GM12878 (cell line): ENCODE measurements at regions of chr11 and their contacts with region 1.

Region 1: GRCh38 chr11:4072668-4073285 is 21.8 kb upstream of the RRM1 start:
- DNase-seq: peak; percentile 51
- ATAC-seq: peak; percentile 95
- H3K4me3 ChIP-seq: no peak overlapping the region
- H3K27ac ChIP-seq: no peak overlapping the region
- H3K4me1 ChIP-seq: no peaks in the 10 kb centered on the region
- H3K27me3 ChIP-seq: no peaks in the 10 kb centered on the region
- CTCF ChIP-seq: peak; percentile 75 to 95 (median 83)
- EP300 ChIP-seq: no peak
- POLR2A ChIP-seq: no peak
- RAD21 ChIP-seq: peak; percentile 98

Region 2: DNA sequence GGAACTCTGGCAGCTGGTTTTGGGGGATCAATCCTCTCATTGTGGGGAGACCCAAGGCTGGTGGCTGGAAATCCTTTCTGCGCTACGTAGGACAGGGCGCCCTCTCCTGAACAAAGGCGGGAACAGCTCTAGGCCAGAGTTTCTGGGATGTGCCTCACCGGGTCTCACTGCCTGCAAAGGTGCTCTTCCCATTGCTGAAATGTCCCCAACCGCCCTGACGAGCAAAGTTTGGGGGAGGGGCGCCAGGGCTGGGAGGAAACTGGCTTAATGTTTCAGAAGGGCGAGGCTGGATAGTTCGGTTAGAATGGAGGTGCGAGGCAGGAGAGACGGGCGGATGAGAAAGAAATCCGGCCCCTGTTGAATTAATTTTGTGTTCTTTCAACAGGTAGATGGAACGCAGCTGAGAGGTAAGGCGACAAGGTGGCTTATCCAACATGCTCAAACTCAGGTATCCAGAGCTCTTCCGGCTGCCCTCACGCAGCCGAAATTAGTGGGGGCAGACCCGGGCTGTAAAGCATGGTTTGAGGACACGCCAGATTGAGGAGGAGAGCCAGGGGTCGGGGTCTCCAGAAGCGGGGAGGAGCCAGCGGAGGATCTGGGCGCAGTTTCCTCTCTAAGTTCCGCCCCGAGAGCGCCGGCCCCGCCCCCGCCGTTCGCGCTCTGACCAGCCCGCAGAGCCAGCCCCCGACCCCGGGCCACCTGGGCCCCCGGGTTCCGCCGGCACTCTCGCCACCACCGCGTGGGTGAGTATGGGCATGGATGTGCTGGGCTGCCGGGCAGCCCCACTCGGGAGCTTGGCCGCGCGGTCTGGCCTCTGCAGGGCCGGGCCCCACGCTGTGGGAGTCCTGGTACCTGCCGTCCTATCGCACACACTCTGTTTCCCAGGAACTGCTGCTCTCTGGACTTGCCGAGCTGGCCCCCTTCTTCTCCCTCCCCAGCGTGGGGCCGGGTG is 264.6 kb before region 1 on chr11 and contains the start of gene PGAP2:
- CTCF ChIA-PET with region 1: interaction called, 43 read pairs
- POLR2A ChIA-PET with region 1: interaction called, 5 read pairs
- RAD21 ChIA-PET with region 1: interaction called, 17 read pairs
- SMC1A ChIA-PET with region 1: interaction called, 26 read pairs
- in situ Hi-C with region 1: no loop called
- intact Hi-C with region 1: no loop called
- DNase-seq: no peak
- ATAC-seq: peak; percentile 89
- H3K4me3 ChIP-seq: peak within 1 kb of the TSS; percentile 92
- H3K27ac ChIP-seq: peak within 1 kb of the TSS; percentile 57
- H3K4me1 ChIP-seq: no peaks in the 10 kb centered on the region
- H3K27me3 ChIP-seq: no peaks in the 10 kb centered on the region
- CTCF ChIP-seq: peak; percentile 71 to 75 (median 73)
- EP300 ChIP-seq: no peak
- POLR2A ChIP-seq: peak; percentile 46; the same call in 1 of the 2 replicates
- RAD21 ChIP-seq: peak; percentile 62
- polyA plus RNA-seq, gene PGAP2: 25.4 to 37.4 TPM

Region 3: DNA sequence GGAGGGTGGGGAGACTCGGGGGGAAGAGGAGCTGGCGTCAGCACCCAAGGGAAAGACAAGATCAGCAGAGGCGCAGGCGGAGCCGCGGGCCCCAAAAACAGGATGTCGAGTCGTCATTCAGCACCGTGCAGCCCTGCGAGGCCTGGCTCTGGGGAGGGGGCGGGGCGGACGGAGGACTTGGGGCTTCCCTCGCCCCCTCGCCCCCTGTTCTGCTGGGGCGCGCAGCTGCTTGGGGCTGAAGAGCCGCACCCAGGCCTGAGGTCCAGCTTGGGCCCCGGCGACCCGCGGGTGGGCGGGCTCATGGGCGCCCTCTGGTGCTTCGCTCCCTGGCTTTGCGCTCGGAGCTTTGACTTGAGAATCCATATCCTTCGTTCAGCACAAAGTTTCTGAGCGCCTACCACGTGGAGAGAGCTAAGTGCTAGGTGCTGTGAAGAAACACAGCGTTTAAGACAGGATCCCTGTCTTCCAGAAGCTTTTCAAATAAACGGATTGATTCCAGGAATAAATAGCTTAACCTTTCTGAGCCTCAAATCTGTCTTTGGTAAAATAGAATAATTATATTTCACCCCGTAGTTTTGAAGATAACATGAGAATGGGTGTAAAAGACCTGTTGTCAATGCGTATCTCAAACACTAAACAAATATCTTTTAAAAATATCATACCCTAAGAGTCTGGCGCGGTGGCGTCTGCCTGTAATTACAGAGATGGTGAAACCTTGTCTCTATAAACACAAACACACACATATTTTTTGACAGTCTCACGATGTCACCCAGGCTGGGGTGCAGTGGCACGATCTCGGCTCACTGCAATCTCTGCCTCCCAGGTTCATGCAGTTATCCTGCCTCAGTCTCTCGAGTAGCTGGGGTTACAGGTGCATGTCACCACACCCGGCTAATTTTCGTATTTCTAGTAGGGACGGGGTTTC is 231.1 kb before region 1 on chr11:
- CTCF ChIA-PET with region 1: interaction called, 979 read pairs
- POLR2A ChIA-PET with region 1: interaction called, 5 read pairs
- RAD21 ChIA-PET with region 1: interaction called, 605 read pairs
- SMC1A ChIA-PET with region 1: interaction called, 805 read pairs
- in situ Hi-C with region 1: loop called (anchors 5 kb)
- intact Hi-C with region 1: no loop called
- DNase-seq: peak; percentile 79
- ATAC-seq: peak; percentile 71
- H3K4me3 ChIP-seq: peak overlapping the region; percentile 98
- H3K27ac ChIP-seq: peak overlapping the region; percentile 82
- H3K4me1 ChIP-seq: peaks cover 15% of the 10 kb centered on the region
- H3K27me3 ChIP-seq: no peaks in the 10 kb centered on the region
- CTCF ChIP-seq: peak; percentile 78 to 88 (median 85)
- EP300 ChIP-seq: no peak
- POLR2A ChIP-seq: peak; percentile 71
- RAD21 ChIP-seq: peak; percentile 54

Region 4: GRCh38 chr11:3880724-3881123 is 192.1 kb before region 1 on chr11:
- CTCF ChIA-PET with region 1: interaction called, 9 read pairs
- POLR2A ChIA-PET with region 1: no interaction called
- RAD21 ChIA-PET with region 1: interaction called, 6 read pairs
- SMC1A ChIA-PET with region 1: interaction called, 10 read pairs
- in situ Hi-C with region 1: no loop called
- intact Hi-C with region 1: no loop called
- DNase-seq: no peak
- ATAC-seq: peak; percentile 70
- H3K4me3 ChIP-seq: peak overlapping the region; percentile 46
- H3K27ac ChIP-seq: peak overlapping the region; percentile 83
- H3K4me1 ChIP-seq: peaks cover 65% of the 10 kb centered on the region
- H3K27me3 ChIP-seq: no peaks in the 10 kb centered on the region
- CTCF ChIP-seq: no peak
- EP300 ChIP-seq: no peak
- POLR2A ChIP-seq: 0 out of 2 replicates have a peak, but pooled peaks have one; percentile 19
- RAD21 ChIP-seq: no peak

Region 5: DNA sequence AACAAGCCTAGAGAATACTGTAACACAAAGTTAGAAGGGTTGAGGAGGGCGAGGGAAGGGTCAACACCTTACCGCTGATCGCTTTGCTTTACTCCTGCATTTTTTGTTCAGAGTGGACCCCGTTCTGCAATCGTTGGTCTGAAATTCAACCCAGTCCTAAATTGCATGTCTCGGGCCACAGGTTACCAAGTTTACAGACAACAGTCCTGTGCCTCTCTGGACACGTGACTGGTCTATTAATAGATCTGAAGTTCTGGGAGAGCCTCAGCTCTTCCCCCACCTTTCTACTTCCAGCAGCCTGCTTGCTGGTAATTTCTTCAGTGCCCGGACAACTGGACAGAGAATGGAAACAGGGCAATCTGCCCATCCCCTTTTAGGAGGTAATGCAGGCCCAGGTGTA is 143.1 kb before region 1 on chr11:
- CTCF ChIA-PET with region 1: interaction called, 37 read pairs
- POLR2A ChIA-PET with region 1: interaction called, 3 read pairs
- RAD21 ChIA-PET with region 1: interaction called, 9 read pairs
- SMC1A ChIA-PET with region 1: interaction called, 38 read pairs
- in situ Hi-C with region 1: no loop called
- intact Hi-C with region 1: no loop called
- DNase-seq: no peak
- ATAC-seq: no peak
- H3K4me3 ChIP-seq: no peak overlapping the region
- H3K27ac ChIP-seq: no peak overlapping the region
- H3K4me1 ChIP-seq: peaks cover 14% of the 10 kb centered on the region
- H3K27me3 ChIP-seq: no peaks in the 10 kb centered on the region
- CTCF ChIP-seq: no peak
- EP300 ChIP-seq: no peak
- POLR2A ChIP-seq: no peak
- RAD21 ChIP-seq: no peak

Region 6: DNA sequence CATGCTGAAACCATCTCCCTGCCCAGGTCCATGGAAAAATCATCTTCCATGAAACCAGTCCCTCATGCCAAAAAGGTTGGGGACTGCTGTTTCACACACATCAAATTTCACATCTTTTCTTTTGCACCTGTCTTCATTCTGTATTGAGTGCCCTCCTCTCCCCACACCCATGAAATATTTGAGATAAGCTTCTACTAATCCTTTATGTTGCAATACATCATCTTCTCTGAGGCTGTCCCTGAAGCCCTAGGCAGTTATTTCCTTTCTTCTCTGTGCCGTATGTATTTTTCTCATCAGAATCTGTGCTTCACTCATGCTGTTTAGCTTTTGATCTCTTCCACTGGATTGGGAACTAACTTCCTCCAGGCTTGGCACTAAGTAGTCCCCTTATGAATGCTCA is 18.1 kb before region 1 on chr11:
- CTCF ChIA-PET with region 1: interaction called, 45 read pairs
- POLR2A ChIA-PET with region 1: interaction called, 5 read pairs
- RAD21 ChIA-PET with region 1: interaction called, 11 read pairs
- SMC1A ChIA-PET with region 1: interaction called, 14 read pairs
- in situ Hi-C with region 1: no loop called
- intact Hi-C with region 1: no loop called
- DNase-seq: no peak
- ATAC-seq: no peak
- H3K4me3 ChIP-seq: no peak overlapping the region
- H3K27ac ChIP-seq: no peak overlapping the region
- H3K4me1 ChIP-seq: peaks cover 19% of the 10 kb centered on the region
- H3K27me3 ChIP-seq: no peaks in the 10 kb centered on the region
- CTCF ChIP-seq: no peak
- EP300 ChIP-seq: no peak
- POLR2A ChIP-seq: no peak
- RAD21 ChIP-seq: no peak

Region 7: DNA sequence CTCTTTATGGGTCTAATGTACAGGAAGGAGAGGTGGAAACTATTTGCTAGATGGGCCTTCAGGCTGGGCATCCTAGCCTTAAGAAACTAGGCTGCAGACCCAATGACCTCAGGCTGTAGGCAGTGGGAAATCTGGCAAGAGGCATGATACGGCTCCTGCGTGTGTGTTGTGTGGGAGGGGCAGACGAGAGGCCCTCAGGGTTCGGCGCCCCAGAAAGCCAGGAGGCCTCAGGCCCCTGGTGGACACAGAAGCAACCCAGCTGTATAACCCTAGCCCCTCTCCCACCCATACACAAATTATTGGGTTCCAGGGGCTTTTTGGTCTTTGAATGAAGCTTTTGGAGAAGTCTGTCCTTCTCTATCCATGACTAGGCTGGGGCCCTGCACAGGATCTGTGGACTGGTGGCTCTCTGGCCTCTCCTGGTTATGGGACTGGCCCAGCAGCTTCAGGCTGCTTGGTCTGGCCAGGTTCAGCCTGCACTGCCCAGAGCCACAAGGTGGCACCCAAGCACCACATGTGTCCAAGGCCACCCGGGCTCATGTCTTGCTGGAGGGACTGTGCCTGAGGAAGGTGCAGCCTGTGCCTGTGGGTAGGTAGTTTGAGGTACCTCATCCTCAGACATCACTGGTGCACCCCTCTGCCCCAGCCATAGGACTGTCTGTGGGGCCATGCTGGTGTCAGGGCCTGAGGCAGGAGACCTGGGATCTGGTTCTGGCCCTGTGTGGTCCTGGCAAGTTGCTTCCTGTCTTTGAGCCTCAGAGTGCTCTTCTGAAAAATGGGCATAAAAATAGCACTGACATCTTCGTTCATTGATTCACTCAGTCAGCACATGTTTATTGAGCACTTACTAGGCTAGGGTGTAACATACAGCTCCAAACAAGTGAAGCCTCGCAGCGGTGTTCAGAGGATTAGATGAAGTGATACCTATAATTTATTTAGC is 109.3 kb after region 1 on chr11:
- CTCF ChIA-PET with region 1: no interaction called
- POLR2A ChIA-PET with region 1: no interaction called
- RAD21 ChIA-PET with region 1: no interaction called
- SMC1A ChIA-PET with region 1: no interaction called
- in situ Hi-C with region 1: no loop called
- intact Hi-C with region 1: no loop called
- DNase-seq: no peak
- ATAC-seq: peak; percentile 97
- H3K4me3 ChIP-seq: no peak overlapping the region
- H3K27ac ChIP-seq: no peak overlapping the region
- H3K4me1 ChIP-seq: no peaks in the 10 kb centered on the region
- H3K27me3 ChIP-seq: no peaks in the 10 kb centered on the region; a peak in 1 of 4 replicates
- CTCF ChIP-seq: peak; percentile 67 to 90 (median 75)
- EP300 ChIP-seq: no peak
- POLR2A ChIP-seq: no peak
- RAD21 ChIP-seq: peak; percentile 53

Region 8: GRCh38 chr11:4416816-4417215 is 344.0 kb after region 1 on chr11:
- CTCF ChIA-PET with region 1: no interaction called
- POLR2A ChIA-PET with region 1: no interaction called
- RAD21 ChIA-PET with region 1: no interaction called
- SMC1A ChIA-PET with region 1: no interaction called
- in situ Hi-C with region 1: no loop called
- intact Hi-C with region 1: no loop called
- DNase-seq: no peak
- ATAC-seq: no peak
- H3K4me3 ChIP-seq: no peak overlapping the region
- H3K27ac ChIP-seq: no peak overlapping the region
- H3K4me1 ChIP-seq: no peaks in the 10 kb centered on the region
- H3K27me3 ChIP-seq: no peaks in the 10 kb centered on the region; a peak in 2 of 4 replicates
- CTCF ChIP-seq: no peak
- EP300 ChIP-seq: no peak
- POLR2A ChIP-seq: no peak
- RAD21 ChIP-seq: no peak

Region 9: GRCh38 chr11:4496557-4497275 is 423.9 kb after region 1 on chr11:
- CTCF ChIA-PET with region 1: no interaction called
- POLR2A ChIA-PET with region 1: no interaction called
- RAD21 ChIA-PET with region 1: no interaction called
- SMC1A ChIA-PET with region 1: no interaction called
- in situ Hi-C with region 1: no loop called
- intact Hi-C with region 1: no loop called
- DNase-seq: no peak
- ATAC-seq: no peak
- H3K4me3 ChIP-seq: no peak overlapping the region
- H3K27ac ChIP-seq: no peak overlapping the region
- H3K4me1 ChIP-seq: no peaks in the 10 kb centered on the region; the same call in 1 of the 2 replicates
- H3K27me3 ChIP-seq: no peaks in the 10 kb centered on the region
- CTCF ChIP-seq: no peak
- EP300 ChIP-seq: no peak
- POLR2A ChIP-seq: no peak
- RAD21 ChIP-seq: no peak

Region 10: GRCh38 chr11:4569075-4569474 is 496.3 kb after region 1 on chr11:
- CTCF ChIA-PET with region 1: no interaction called
- POLR2A ChIA-PET with region 1: no interaction called
- RAD21 ChIA-PET with region 1: no interaction called
- SMC1A ChIA-PET with region 1: no interaction called
- in situ Hi-C with region 1: no loop called
- intact Hi-C with region 1: no loop called
- DNase-seq: no peak
- ATAC-seq: no peak
- H3K4me3 ChIP-seq: no peak overlapping the region
- H3K27ac ChIP-seq: no peak overlapping the region
- H3K4me1 ChIP-seq: no peaks in the 10 kb centered on the region
- H3K27me3 ChIP-seq: no peaks in the 10 kb centered on the region; a peak in 1 of 4 replicates
- CTCF ChIP-seq: no peak
- EP300 ChIP-seq: no peak
- POLR2A ChIP-seq: no peak
- RAD21 ChIP-seq: no peak